Right cardiac atrium (tissue), 5 donors: ENCODE measurements at regions of chr6 and their contacts with region 1.

Region 1: GRCh38 chr6:38018755-38019165 is 199.2 kb downstream of the ZFAND3 start:
- DNase-seq: peak in 1 of 3 donors; percentile 15
- ATAC-seq: peak in 1 of 2 donors; percentile 47
- H3K4me3 ChIP-seq: no peak overlapping the region
- H3K27ac ChIP-seq: no peak overlapping the region
- H3K4me1 ChIP-seq: peaks cover 5% of the 10 kb centered on the region
- H3K27me3 ChIP-seq: no peaks in the 10 kb centered on the region

Region 2: DNA sequence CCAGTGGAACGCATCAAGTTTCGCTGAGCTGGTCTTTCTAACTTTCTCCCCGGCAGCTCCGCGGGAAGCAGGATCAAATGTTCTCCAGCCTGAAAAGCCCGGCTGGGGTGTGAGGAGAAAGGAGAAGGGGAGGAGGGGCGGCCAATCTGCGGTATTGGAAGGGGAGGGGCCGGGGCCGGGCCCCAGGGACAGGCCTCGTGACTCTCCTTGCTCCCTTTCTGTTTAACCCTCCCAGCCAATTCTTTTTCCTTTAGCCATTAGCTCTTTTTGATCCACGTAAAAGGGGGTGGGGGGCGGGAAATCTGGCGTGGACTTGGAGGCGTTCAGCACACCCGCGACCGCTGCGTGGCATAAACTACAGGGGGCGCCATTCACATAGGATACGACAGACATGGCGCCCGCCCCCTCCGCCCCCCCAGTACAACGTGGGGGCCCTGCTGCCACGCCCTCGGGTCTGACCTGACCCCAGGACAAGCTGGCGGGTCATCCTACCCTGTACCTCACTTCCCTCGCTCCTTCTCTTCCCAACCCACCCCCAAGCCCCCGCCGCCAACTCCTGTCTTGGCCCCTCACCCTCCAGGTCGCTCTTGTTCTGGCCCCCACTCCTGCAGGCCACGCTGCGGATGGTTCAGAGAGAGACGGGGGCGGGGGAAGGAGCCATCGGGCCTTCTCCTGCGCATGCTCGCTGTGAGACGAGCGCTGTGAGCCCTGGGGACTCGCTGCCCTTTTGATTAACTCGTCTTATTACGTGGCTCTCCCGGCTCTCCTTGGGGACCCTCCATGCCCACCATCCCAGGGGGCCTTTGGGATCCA is 313.3 kb before region 1 on chr6:
- intact Hi-C with region 1: loop called in 1 of 4 experiments (anchors 5 kb)
- DNase-seq: peak; percentile 87 to 94 (median 91)
- ATAC-seq: peak; percentile 92 to 94
- H3K4me3 ChIP-seq: peak overlapping the region; percentile 53
- H3K27ac ChIP-seq: peak overlapping the region; percentile 71
- H3K4me1 ChIP-seq: no peaks in the 10 kb centered on the region
- H3K27me3 ChIP-seq: no peaks in the 10 kb centered on the region